BJ (cell line): ENCODE measurements at regions of chr19 and their contacts with region 1.

Region 1: DNA sequence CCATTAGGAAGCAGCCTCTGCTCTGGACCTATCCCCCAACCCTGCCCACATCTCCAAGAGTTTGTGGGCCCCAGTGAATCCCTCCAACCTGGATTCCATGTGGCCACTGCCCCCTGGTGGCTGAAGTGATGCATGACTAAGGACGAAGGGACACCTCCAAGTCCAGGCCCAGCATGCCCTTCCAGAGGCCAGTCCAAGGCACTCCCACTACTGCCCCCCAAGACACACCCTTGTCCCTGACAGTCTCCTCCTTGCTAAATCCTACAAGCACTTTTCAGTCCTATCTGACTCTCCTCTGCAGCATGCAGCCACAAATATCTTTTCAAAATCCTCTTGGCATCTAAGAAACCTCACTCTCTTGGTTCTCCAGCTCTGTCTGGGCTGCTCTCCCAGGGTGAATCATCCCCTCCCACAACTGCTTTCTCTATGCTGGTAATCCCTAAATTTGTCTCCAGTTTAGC is 33.0 kb downstream of the DEDD2 start:
- DNase-seq: peak; percentile 40
- H3K4me3 ChIP-seq: no peak overlapping the region
- H3K27me3 ChIP-seq: peaks cover 18% of the 10 kb centered on the region
- CTCF ChIP-seq: peak; percentile 95

Region 2: DNA sequence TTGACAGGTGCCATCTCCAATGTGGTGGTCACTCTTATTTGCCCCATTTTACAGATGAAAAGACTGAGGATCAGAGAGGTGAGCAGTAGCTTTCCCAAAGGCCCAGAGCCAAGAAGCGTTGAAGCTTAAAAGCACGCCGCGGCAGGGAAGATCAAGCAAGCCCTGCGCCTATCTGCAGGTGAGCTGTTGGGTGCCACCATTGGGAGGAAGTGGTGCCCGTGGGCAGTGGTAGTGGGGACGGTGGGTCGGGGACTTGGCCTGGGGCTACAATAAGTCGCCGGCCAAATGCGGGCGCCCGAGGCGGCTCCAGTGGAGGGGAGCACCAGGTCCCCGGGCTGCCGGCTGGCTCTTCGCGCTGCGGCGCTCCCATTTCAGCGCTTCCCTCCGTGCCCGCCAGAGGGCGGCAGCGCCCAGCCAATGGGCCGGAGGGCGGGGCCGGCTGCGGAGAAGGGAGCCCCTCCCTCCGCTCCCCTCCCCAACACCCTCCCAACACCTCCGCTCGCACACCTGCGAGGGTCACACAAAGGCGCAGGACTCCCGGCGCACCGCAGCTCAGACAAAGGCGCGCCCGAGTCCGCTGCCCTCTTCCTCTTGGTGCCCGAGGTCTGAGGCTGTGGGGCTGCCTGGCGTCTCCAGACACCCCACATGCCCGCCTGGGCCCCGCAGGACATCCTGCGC is 51.4 kb before region 1 on chr19:
- CTCF ChIA-PET with region 1: interaction called, 20 read pairs
- POLR2A ChIA-PET with region 1: no interaction called
- DNase-seq: no peak
- H3K4me3 ChIP-seq: peak overlapping the region; percentile 33
- H3K27me3 ChIP-seq: peaks cover 2% of the 10 kb centered on the region; the same call in 1 of the 2 replicates
- CTCF ChIP-seq: peak; percentile 89

Region 3: GRCh38 chr19:42207767-42208271 is 23.4 kb after region 1 on chr19:
- CTCF ChIA-PET with region 1: interaction called, 35 read pairs
- POLR2A ChIA-PET with region 1: no interaction called
- DNase-seq: no peak
- H3K4me3 ChIP-seq: no peak overlapping the region
- H3K27me3 ChIP-seq: no peaks in the 10 kb centered on the region
- CTCF ChIP-seq: no peak

Region 4: DNA sequence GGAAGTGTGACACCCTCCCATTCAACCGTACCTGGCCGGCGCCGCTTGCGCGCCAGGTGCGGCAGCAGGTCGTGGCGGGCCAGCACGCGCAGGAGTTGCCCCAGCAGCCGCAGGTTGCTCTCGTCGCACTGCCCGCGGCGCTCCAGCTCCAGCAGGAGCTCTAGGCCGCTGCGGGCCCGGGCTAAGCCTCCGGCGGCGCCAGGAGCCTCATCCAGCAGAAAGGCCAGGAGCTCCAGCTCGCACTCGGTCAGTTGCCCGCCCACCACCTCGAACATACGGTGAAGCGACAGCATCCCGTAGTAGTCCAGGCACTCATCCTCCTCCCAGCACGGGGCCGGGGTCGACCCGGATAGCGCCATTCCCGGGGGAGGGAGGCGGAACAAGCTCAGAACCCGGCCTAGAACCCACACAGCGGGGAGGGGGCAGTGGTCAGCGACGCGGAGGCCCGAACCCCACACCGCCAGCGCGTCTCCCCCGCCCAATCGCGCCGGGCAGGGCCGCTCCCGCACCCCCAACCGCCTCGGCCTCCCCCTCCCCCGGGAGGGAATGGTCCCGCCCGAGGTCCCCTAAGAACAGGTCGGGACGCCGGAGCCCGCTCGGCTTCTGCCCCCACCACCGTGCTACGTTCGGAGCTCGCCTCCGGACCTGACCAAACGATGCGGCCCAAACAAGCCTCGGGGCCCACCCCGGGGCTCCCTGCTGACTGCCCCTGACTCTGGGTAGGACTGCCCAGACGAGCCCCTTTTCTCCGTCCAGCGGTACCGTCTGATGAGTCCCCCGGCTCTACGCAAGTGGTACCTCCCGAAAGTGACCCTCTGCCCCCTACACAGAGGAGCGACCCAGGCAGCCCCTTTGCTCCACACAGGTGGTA is 32.5 kb after region 1 on chr19:
- CTCF ChIA-PET with region 1: interaction called, 12 read pairs
- POLR2A ChIA-PET with region 1: no interaction called
- DNase-seq: no peak
- H3K4me3 ChIP-seq: peak overlapping the region; percentile 79
- H3K27me3 ChIP-seq: no peaks in the 10 kb centered on the region
- CTCF ChIP-seq: no peak

Region 5: DNA sequence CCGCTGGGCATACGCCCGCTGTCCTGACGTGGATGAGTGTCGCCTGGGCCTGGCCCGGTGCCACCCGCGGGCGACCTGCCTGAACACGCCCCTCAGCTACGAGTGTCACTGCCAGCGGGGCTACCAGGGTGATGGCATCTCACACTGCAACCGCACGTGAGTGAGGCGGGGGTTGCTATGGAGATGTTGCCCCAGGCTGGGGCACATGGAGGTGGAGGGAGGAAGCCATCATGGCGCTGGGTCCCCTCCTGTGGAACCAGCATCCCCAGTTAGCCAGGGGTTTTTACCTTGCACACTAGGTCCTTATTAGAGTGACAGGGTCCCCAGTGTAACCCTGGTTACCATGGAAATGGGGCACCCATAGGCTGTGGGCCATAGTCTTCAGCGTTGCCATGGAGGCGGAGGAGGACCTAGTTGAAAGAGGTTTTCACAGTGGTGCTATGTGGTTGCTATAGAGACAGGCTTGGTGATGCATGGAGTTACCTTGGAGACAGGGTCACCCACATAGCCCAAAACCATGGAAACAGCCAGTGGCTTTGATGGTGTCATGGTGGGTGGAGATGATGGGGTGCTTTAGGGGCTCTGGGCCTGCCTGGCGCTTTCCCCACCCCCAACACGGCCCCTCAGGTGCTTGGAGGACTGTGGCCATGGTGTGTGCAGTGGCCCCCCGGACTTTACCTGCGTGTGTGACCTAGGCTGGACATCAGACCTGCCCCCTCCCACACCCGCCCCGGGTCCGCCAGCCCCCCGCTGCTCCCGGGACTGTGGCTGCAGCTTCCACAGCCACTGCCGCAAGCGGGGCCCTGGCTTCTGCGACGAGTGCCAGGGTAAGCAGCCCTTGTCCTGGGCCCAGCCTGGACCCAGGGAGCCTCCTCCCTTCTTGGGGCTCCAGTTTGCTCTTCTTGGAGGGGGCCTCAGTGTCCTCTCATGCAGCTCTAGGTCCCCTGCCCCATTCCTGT is 168.1 kb after region 1 on chr19:
- CTCF ChIA-PET with region 1: no interaction called
- POLR2A ChIA-PET with region 1: no interaction called
- DNase-seq: no peak
- H3K4me3 ChIP-seq: no peak overlapping the region
- H3K27me3 ChIP-seq: no peaks in the 10 kb centered on the region
- CTCF ChIP-seq: no peak